ENCODE measurements at regions of chr4 and their contacts with region 1.

Region 1: GRCh38 chr4:139083956-139084803 is 68.6 kb downstream of the NOCT start:
- DNase-seq: peak; percentile 84 to 89 (median 85)
- H3K4me3 ChIP-seq: peak overlapping the region; percentile 73 to 99
- H3K4me3 Mint-ChIP-seq: peak overlapping the region; percentile 89 to 100 (median 92)
- H3K27ac ChIP-seq: peak overlapping the region; percentile 96
- H3K27ac Mint-ChIP-seq: peak overlapping the region; percentile 91 to 97 (median 94)
- H3K4me1 ChIP-seq: peaks cover 37% of the 10 kb centered on the region
- H3K4me1 Mint-ChIP-seq: peaks cover 26 to 52% (median 36%) of the 10 kb centered on the region in 4 donors
- H3K27me3 ChIP-seq: no peaks in the 10 kb centered on the region
- H3K27me3 Mint-ChIP-seq: no peaks in the 10 kb centered on the region

Region 2: DNA sequence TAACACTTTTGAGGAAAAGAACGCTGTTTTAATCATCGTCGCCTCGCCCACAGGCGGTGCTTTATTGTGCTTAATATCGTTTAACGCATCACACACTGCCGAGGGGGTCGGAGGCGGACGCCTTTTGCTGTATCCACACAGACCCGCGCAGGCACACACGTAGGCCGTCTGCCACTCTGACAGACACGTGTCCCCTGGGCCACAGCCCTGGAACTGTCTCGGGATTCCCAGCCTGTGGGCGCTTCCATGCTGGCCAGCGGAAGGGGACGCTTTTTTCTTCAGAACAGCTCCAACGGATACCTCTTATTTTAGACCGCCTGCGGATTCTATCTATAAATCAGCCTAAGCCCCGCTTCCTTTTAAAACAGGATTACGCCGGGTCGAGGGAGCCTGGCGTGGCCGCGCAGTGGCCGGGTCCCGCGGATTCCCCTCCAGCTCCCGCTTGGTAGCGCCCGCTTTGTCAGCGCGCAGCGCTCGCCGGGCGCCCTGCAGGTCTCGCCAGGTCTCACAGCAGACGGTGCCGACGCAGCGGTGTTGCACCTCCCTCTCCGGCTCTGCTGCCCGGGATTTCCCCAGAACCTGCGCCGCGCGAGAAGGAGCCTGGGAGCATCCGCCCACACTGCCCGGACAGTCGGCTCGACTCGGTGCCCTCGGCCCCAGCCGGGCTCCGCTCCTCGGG is 68.8 kb before region 1 on chr4 and contains the start of gene NOCT:
- CTCF ChIA-PET with region 1: interaction called, 3 read pairs
- POLR2A ChIA-PET with region 1: interaction called, 29 read pairs
- intact Hi-C with region 1: loop called (anchors 1 kb)
- DNase-seq: peak; percentile 90 to 96 (median 93)
- H3K4me3 ChIP-seq: peak within 1 kb of the TSS; percentile 20 to 66
- H3K4me3 Mint-ChIP-seq: peak within 1 kb of the TSS; percentile 87 to 94 (median 90)
- H3K27ac ChIP-seq: peak within 1 kb of the TSS; percentile 84
- H3K27ac Mint-ChIP-seq: peak within 1 kb of the TSS; percentile 93 to 100 (median 99)
- H3K4me1 ChIP-seq: peaks cover 18% of the 10 kb centered on the region
- H3K4me1 Mint-ChIP-seq: peaks cover 13 to 44% (median 17%) of the 10 kb centered on the region in 4 donors
- H3K27me3 ChIP-seq: no peaks in the 10 kb centered on the region
- H3K27me3 Mint-ChIP-seq: no peaks in the 10 kb centered on the region
- total RNA-seq, gene NOCT: 1.4 to 1.7 TPM

Region 3: DNA sequence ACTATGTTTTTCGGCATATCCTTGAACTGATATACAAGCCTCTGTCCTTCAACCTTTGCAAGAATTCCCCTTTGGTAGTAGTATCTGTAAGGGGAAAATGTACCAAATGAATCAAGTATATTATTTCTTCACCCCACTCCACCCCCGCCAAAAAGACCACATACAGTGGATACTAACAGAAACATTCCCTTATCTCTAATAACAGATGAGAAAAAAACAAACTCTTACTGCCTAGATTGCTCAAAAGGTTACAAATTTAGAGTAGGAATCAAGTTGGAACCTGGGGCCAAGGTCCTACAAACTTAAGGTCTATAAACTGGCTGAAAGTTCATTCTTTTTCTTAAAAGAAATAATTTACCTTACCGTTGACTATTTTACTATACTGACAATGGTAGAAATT is 23.6 kb before region 1 on chr4:
- CTCF ChIA-PET with region 1: interaction called, 3 read pairs
- POLR2A ChIA-PET with region 1: no interaction called
- intact Hi-C with region 1: loop called (anchors 2 kb)
- DNase-seq: no peak
- H3K4me3 ChIP-seq: no peak overlapping the region
- H3K4me3 Mint-ChIP-seq: no peak overlapping the region
- H3K27ac ChIP-seq: no peak overlapping the region
- H3K27ac Mint-ChIP-seq: peak overlapping the region in 4 of 7 donors; percentile 6 to 37 (median 22)
- H3K4me1 ChIP-seq: peaks cover 6% of the 10 kb centered on the region
- H3K4me1 Mint-ChIP-seq: peaks cover 15 to 34% (median 21%) of the 10 kb centered on the region in 4 donors
- H3K27me3 ChIP-seq: no peaks in the 10 kb centered on the region
- H3K27me3 Mint-ChIP-seq: no peaks in the 10 kb centered on the region

Region 4: GRCh38 chr4:139099366-139099982 is 15.3 kb after region 1 on chr4:
- CTCF ChIA-PET with region 1: interaction called, 9 read pairs
- POLR2A ChIA-PET with region 1: interaction called, 6 read pairs
- intact Hi-C with region 1: loop called (anchors 1 kb)
- DNase-seq: peak; percentile 70 to 78 (median 73)
- H3K4me3 ChIP-seq: no peak overlapping the region
- H3K4me3 Mint-ChIP-seq: no peak overlapping the region
- H3K27ac ChIP-seq: no peak overlapping the region
- H3K27ac Mint-ChIP-seq: peak overlapping the region in 1 of 7 donors; percentile 43
- H3K4me1 ChIP-seq: no peaks in the 10 kb centered on the region
- H3K4me1 Mint-ChIP-seq: peaks cover 0 to 6% (median 3%) of the 10 kb centered on the region in 4 donors
- H3K27me3 ChIP-seq: no peaks in the 10 kb centered on the region
- H3K27me3 Mint-ChIP-seq: no peaks in the 10 kb centered on the region

Region 5: DNA sequence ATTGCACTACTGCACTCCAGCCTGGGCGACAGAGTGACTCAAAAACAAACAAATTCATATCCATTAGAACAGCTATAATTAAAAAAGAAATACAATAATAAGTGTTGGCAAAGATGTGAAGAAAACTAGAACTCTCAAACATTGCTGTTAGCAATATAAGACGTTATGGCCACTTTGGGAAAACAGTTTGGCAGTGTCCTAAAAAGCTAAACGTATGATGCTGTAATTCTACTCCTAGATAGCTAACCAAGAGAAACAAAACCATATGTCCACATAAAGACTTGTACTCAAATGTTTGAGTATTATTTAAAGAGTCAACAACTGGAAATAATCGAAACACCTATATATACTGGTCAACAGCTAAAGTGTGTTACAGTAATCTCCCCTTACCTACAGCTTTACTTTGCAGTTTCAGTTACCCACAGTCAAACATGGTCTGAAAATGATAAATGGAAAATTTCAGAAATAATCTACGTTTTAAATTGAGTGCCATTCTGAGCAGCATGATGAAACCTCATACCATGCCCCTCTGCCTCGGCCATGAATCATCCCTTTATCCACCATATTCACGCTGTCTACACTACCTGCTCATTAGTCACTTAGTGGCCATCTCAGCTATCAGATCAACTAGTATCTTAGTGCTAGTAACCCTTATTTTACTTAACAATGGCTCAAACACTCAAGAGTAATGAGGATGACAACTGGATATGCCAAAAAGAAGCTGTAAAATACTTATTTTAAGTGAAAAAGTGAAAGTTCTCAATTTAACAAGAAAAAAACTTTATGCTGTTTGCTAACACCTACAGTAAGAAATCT is 87.9 kb after region 1 on chr4:
- CTCF ChIA-PET with region 1: no interaction called
- POLR2A ChIA-PET with region 1: interaction called, 37 read pairs
- intact Hi-C with region 1: loop called (anchors 1 kb)
- DNase-seq: no peak
- H3K4me3 ChIP-seq: no peak overlapping the region
- H3K4me3 Mint-ChIP-seq: no peak overlapping the region
- H3K27ac ChIP-seq: no peak overlapping the region
- H3K27ac Mint-ChIP-seq: no peak overlapping the region
- H3K4me1 ChIP-seq: peaks cover 14% of the 10 kb centered on the region
- H3K4me1 Mint-ChIP-seq: peaks cover 20 to 32% (median 25%) of the 10 kb centered on the region in 4 donors
- H3K27me3 ChIP-seq: no peaks in the 10 kb centered on the region
- H3K27me3 Mint-ChIP-seq: no peaks in the 10 kb centered on the region

Region 6: GRCh38 chr4:139177868-139178611 is 93.9 kb after region 1 on chr4:
- CTCF ChIA-PET with region 1: interaction called, 3 read pairs
- POLR2A ChIA-PET with region 1: interaction called, 37 read pairs
- intact Hi-C with region 1: loop called (anchors 1 kb)
- DNase-seq: peak; percentile 92 to 94 (median 92)
- H3K4me3 ChIP-seq: peak overlapping the region; percentile 88 to 89
- H3K4me3 Mint-ChIP-seq: peak overlapping the region; percentile 89 to 94 (median 92)
- H3K27ac ChIP-seq: peak overlapping the region; percentile 96
- H3K27ac Mint-ChIP-seq: peak overlapping the region; percentile 92 to 97 (median 96)
- H3K4me1 ChIP-seq: peaks cover 17% of the 10 kb centered on the region
- H3K4me1 Mint-ChIP-seq: peaks cover 14 to 29% (median 18%) of the 10 kb centered on the region in 4 donors
- H3K27me3 ChIP-seq: no peaks in the 10 kb centered on the region
- H3K27me3 Mint-ChIP-seq: no peaks in the 10 kb centered on the region

Region 7: GRCh38 chr4:139564502-139564901 is 480.3 kb after region 1 on chr4:
- CTCF ChIA-PET with region 1: no interaction called
- POLR2A ChIA-PET with region 1: no interaction called
- intact Hi-C with region 1: no loop called
- DNase-seq: peak in 1 of 5 donors; percentile 9
- H3K4me3 ChIP-seq: no peak overlapping the region
- H3K4me3 Mint-ChIP-seq: no peak overlapping the region
- H3K27ac ChIP-seq: no peak overlapping the region
- H3K27ac Mint-ChIP-seq: peak overlapping the region in 3 of 7 donors; percentile 12 to 62 (median 25)
- H3K4me1 ChIP-seq: peaks cover 20% of the 10 kb centered on the region
- H3K4me1 Mint-ChIP-seq: peaks cover 9 to 29% (median 20%) of the 10 kb centered on the region in 4 donors
- H3K27me3 ChIP-seq: no peaks in the 10 kb centered on the region
- H3K27me3 Mint-ChIP-seq: no peaks in the 10 kb centered on the region

Measured in CD4-positive, alpha-beta memory T cell (primary cell).